Activated naive CD4-positive, alpha-beta T cell treated with anti-CD3 and anti-CD28 coated beads for 36 hours (primary cell): ENCODE measurements at regions of chr12 and their contacts with region 1.

Region 1: GRCh38 chr12:92034858-92035401 is 110.7 kb downstream of the BTG1 start:
- DNase-seq: peak; percentile 86
- H3K4me3 Mint-ChIP-seq: peak overlapping the region; percentile 78
- H3K27ac Mint-ChIP-seq: peak overlapping the region; percentile 93
- H3K4me1 Mint-ChIP-seq: peaks cover 83% of the 10 kb centered on the region
- H3K27me3 Mint-ChIP-seq: no peaks in the 10 kb centered on the region

Region 2: GRCh38 chr12:91811481-91812287 is 223.2 kb before region 1 on chr12:
- CTCF ChIA-PET with region 1: interaction called, 5 read pairs
- intact Hi-C with region 1: loop called (anchors 5 kb)
- DNase-seq: peak; percentile 86
- H3K4me3 Mint-ChIP-seq: peak overlapping the region; percentile 23
- H3K27ac Mint-ChIP-seq: peak overlapping the region; percentile 76
- H3K4me1 Mint-ChIP-seq: peaks cover 21% of the 10 kb centered on the region
- H3K27me3 Mint-ChIP-seq: no peaks in the 10 kb centered on the region

Region 3: DNA sequence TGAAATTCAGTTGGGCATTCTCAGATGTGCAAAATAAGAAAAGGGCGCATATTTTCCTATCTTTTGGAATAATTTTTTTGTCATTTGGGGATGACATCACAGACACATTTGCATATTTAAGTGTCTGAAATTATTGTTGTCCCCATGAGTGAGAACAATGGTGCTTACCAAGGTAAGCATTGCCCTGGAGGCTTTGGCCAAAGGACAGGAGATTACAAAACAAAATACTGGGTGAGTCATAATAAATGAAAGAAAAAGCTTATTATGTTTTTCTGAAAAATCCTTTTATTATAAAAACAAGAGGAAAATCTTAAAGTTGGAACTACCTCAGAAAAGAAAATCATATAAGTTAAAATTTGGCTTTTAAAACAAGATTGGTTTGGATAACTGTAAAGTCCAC is 144.2 kb before region 1 on chr12:
- CTCF ChIA-PET with region 1: no interaction called
- intact Hi-C with region 1: no loop called
- DNase-seq: no peak
- H3K4me3 Mint-ChIP-seq: no peak overlapping the region
- H3K27ac Mint-ChIP-seq: no peak overlapping the region
- H3K4me1 Mint-ChIP-seq: peaks cover 4% of the 10 kb centered on the region
- H3K27me3 Mint-ChIP-seq: no peaks in the 10 kb centered on the region

Region 4: GRCh38 chr12:91947459-91947858 is 87.5 kb before region 1 on chr12:
- CTCF ChIA-PET with region 1: no interaction called
- intact Hi-C with region 1: no loop called
- DNase-seq: no peak
- H3K4me3 Mint-ChIP-seq: no peak overlapping the region
- H3K27ac Mint-ChIP-seq: no peak overlapping the region
- H3K4me1 Mint-ChIP-seq: peaks cover 11% of the 10 kb centered on the region
- H3K27me3 Mint-ChIP-seq: no peaks in the 10 kb centered on the region

Region 5: GRCh38 chr12:92010853-92011701 is 23.9 kb before region 1 on chr12:
- CTCF ChIA-PET with region 1: interaction called, 4 read pairs
- intact Hi-C with region 1: loop called (anchors 2 kb)
- DNase-seq: peak; percentile 25
- H3K4me3 Mint-ChIP-seq: peak overlapping the region; percentile 47
- H3K27ac Mint-ChIP-seq: peak overlapping the region; percentile 63
- H3K4me1 Mint-ChIP-seq: peaks cover 51% of the 10 kb centered on the region
- H3K27me3 Mint-ChIP-seq: no peaks in the 10 kb centered on the region

Region 6: GRCh38 chr12:92055864-92056263 is 20.9 kb after region 1 on chr12:
- CTCF ChIA-PET with region 1: no interaction called
- intact Hi-C with region 1: loop called (anchors 1 kb)
- DNase-seq: peak; percentile 84
- H3K4me3 Mint-ChIP-seq: peak overlapping the region; percentile 42
- H3K27ac Mint-ChIP-seq: peak overlapping the region; percentile 88
- H3K4me1 Mint-ChIP-seq: peaks cover 81% of the 10 kb centered on the region
- H3K27me3 Mint-ChIP-seq: no peaks in the 10 kb centered on the region

Region 7: GRCh38 chr12:92130999-92131398 is 96.1 kb after region 1 on chr12:
- CTCF ChIA-PET with region 1: no interaction called
- intact Hi-C with region 1: loop called (anchors 1 kb)
- DNase-seq: no peak
- H3K4me3 Mint-ChIP-seq: peak overlapping the region; percentile 79
- H3K27ac Mint-ChIP-seq: peak overlapping the region; percentile 99
- H3K4me1 Mint-ChIP-seq: peaks cover 79% of the 10 kb centered on the region
- H3K27me3 Mint-ChIP-seq: no peaks in the 10 kb centered on the region